ENCODE measurements at regions of chr7 and their contacts with region 1.

Region 1: DNA sequence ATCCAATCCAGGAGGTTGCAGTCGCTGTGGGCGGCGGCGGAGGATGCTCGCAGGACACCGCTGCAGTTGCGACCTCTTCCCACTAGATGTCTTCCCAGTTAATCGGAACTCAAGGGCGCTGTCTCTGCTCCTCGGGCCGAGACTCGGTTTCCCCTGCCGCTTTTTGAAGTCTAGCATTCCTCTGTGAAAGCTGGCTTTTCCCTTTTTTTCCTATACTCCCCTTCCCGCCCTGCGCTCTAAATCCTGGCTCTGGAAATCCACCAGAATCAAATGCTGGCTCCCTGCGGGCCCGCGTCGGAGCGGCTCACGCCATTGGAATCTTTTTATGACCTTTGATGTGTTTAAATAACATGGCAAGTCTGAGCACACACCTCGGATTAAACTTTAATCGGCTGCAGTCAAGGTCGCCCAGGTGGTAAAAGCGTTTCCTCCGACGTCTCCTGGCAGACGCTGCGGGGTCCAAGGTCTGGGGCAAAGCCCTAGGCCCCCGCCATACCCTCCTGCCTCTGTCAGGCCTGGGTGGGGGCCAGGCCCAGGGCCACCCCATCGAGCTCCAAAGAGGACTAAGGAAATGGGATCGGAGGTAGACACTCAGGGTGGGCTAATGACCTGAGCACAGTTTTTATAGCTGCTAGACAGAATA is 10.7 kb upstream of the HOXA13 start:
- DNase-seq: peak; percentile 85
- H3K4me3 ChIP-seq: peak overlapping the region; percentile 31 to 50
- H3K27ac ChIP-seq: no peak overlapping the region
- H3K4me1 ChIP-seq: peaks cover 0 to 16% of the 10 kb centered on the region in 2 experiments; a peak in 1 of 4 replicates
- H3K27me3 ChIP-seq: peaks cover 97% of the 10 kb centered on the region
- CTCF ChIP-seq: peak; percentile 90
- EP300 ChIP-seq: no peak
- RAD21 ChIP-seq: peak; percentile 72

Region 2: DNA sequence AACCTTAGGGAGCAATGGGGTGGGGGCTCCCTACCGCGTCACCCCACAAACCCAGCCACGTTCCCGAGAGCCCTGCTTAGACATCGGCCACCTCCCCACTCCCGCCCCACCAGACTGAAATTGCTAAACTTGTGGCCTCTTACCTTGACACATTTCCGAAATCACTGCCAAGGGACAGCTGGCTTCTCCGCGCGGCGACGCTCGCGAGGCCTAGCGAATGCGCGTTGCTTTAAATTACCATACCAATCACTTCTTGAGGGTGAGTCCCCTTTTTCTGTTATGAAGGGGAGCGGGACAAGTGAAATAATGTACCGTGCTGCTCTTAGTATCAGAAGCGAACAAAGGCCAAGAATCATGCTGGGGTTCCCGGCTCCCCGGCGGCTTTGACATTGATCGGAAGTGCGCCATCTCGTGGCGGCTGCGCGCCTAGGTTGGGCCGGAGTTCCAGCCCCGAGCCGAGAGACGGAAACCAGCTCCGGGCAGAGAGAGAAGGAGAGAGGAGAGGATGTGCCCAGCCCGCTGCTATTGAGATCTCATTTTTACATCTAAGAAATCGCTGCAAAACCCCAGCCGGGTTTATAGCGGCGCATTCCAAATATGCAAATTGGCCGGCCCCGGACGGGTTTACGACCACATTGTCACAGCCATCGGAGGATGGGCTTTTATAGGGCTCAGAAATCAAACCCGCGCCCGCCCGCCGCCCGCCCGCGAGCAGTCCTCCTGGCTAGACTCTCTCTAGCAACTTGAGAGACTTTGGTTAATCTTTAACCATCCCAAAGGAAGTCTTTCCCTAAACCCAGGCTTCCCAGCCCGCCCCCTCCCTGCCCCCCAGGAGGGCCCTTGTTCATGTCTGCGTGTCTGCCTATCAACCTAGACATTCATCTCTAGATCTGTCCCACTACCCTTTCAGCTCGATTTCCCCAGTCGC is 30.8 kb before region 1 on chr7:
- CTCF ChIA-PET with region 1: interaction called, 23 read pairs
- POLR2A ChIA-PET with region 1: no interaction called
- DNase-seq: peak; percentile 93
- H3K4me3 ChIP-seq: peak overlapping the region; percentile 5 to 36; a peak in 2 of 4 replicates
- H3K27ac ChIP-seq: no peak overlapping the region
- H3K4me1 ChIP-seq: peaks cover 4 to 10% of the 10 kb centered on the region in 2 experiments; a peak in 1 of 4 replicates
- H3K27me3 ChIP-seq: peaks cover 97% of the 10 kb centered on the region
- CTCF ChIP-seq: peak; percentile 100
- EP300 ChIP-seq: no peak
- RAD21 ChIP-seq: no peak

Region 3: GRCh38 chr7:27224983-27225934 is 14.7 kb after region 1 on chr7:
- CTCF ChIA-PET with region 1: interaction called, 79 read pairs
- POLR2A ChIA-PET with region 1: no interaction called
- DNase-seq: no peak
- H3K4me3 ChIP-seq: no peak overlapping the region
- H3K27ac ChIP-seq: no peak overlapping the region
- H3K4me1 ChIP-seq: no peaks in the 10 kb centered on the region; a peak in 1 of 4 replicates
- H3K27me3 ChIP-seq: peaks cover 95% of the 10 kb centered on the region
- CTCF ChIP-seq: no peak
- EP300 ChIP-seq: no peak
- RAD21 ChIP-seq: no peak

Region 4: GRCh38 chr7:27576360-27576944 is 365.9 kb after region 1 on chr7:
- CTCF ChIA-PET with region 1: interaction called, 81 read pairs
- POLR2A ChIA-PET with region 1: no interaction called
- DNase-seq: peak; percentile 41
- H3K4me3 ChIP-seq: no peak overlapping the region
- H3K27ac ChIP-seq: no peak overlapping the region
- H3K4me1 ChIP-seq: 0 out of 4 replicates have a peak, but pooled peaks cover 0 to 4% of the 10 kb centered on the region in 2 experiments
- H3K27me3 ChIP-seq: no peaks in the 10 kb centered on the region
- CTCF ChIP-seq: peak; percentile 94
- EP300 ChIP-seq: no peak
- RAD21 ChIP-seq: peak; percentile 83

Region 5: DNA sequence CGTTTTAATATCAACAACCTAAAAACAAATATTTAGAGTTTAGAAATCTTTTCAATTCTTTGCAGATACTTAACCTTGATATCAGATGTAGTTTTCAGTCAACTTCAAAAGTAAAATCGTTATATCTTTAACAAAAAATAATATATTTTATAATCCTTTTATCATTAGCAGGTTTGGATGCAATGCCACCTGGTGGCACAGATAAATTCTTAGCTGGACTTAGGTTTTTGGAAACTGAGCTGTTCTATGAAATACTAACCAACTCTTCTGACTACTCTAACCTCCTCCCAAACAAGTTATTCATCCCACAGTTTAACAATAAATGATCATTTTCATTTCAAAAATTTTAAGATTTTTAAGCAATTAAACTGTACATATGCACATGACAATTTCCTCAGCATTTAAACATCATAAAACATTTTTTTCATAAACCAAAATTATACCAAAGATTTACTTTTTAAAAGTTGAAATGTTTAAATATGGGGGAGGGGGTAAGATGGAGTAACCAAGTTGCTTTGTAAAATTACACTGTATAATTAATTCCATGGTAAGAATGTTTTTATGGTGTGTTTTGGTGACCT is 395.2 kb after region 1 on chr7:
- CTCF ChIA-PET with region 1: interaction called, 22 read pairs
- POLR2A ChIA-PET with region 1: no interaction called
- DNase-seq: no peak
- H3K4me3 ChIP-seq: peak overlapping the region in 1 of 2 experiments; percentile 1; a peak in 1 of 4 replicates
- H3K27ac ChIP-seq: peak overlapping the region; percentile 62 to 84
- H3K4me1 ChIP-seq: peaks cover 7 to 12% of the 10 kb centered on the region in 2 experiments; a peak in 3 of 4 replicates
- H3K27me3 ChIP-seq: no peaks in the 10 kb centered on the region
- CTCF ChIP-seq: peak; percentile 70
- EP300 ChIP-seq: no peak
- RAD21 ChIP-seq: peak; percentile 59

Region 6: GRCh38 chr7:27921081-27921836 is 710.7 kb after region 1 on chr7:
- CTCF ChIA-PET with region 1: interaction called, 58 read pairs
- POLR2A ChIA-PET with region 1: no interaction called
- DNase-seq: peak; percentile 73
- H3K4me3 ChIP-seq: peak overlapping the region in 1 of 2 experiments; percentile 17; a peak in 1 of 4 replicates
- H3K27ac ChIP-seq: peak overlapping the region in 1 of 2 experiments; percentile 43; a peak in 1 of 4 replicates
- H3K4me1 ChIP-seq: peaks cover 0 to 8% of the 10 kb centered on the region in 2 experiments; a peak in 2 of 4 replicates
- H3K27me3 ChIP-seq: no peaks in the 10 kb centered on the region
- CTCF ChIP-seq: peak; percentile 91
- EP300 ChIP-seq: no peak
- RAD21 ChIP-seq: peak; percentile 92

Measured in SK-N-SH (cell line).